ENCODE measurements at regions of chr11 and their contacts with region 1.

Region 1: GRCh38 chr11:44727373-44728287 is 868 bp downstream of the TSPAN18 start:
- DNase-seq: peak; percentile 43 to 45
- ATAC-seq: peak; percentile 68 to 84
- H3K4me3 ChIP-seq: peak overlapping the region; percentile 59 to 94 (median 64)
- H3K27ac ChIP-seq: peak overlapping the region; percentile 22 to 65 (median 48)
- H3K4me1 ChIP-seq: peaks cover 0 to 9% of the 10 kb centered on the region in 2 donors
- H3K27me3 ChIP-seq: peaks cover 13 to 17% (median 17%) of the 10 kb centered on the region in 3 donors
- CTCF ChIP-seq: peak; percentile 56 to 96 (median 88)
- POLR2A ChIP-seq: no peak

Region 2: GRCh38 chr11:44556735-44557409 is 170.8 kb before region 1 on chr11:
- in situ Hi-C with region 1: no loop called
- intact Hi-C with region 1: no loop called
- DNase-seq: peak; percentile 34 to 43
- ATAC-seq: peak; percentile 79 to 81
- H3K4me3 ChIP-seq: no peak overlapping the region
- H3K27ac ChIP-seq: no peak overlapping the region
- H3K4me1 ChIP-seq: peaks cover 5 to 6% of the 10 kb centered on the region in 2 donors
- H3K27me3 ChIP-seq: no peaks in the 10 kb centered on the region
- CTCF ChIP-seq: peak; percentile 86 to 92 (median 92)
- POLR2A ChIP-seq: no peak

Region 3: GRCh38 chr11:44621140-44621681 is 106.4 kb before region 1 on chr11:
- in situ Hi-C with region 1: loop called in 1 of 4 experiments (anchors 10 kb)
- intact Hi-C with region 1: loop called (anchors 2 kb)
- DNase-seq: peak in 1 of 2 donors; percentile 49
- ATAC-seq: peak; percentile 41 to 63
- H3K4me3 ChIP-seq: no peak overlapping the region
- H3K27ac ChIP-seq: no peak overlapping the region
- H3K4me1 ChIP-seq: peaks cover 8 to 9% of the 10 kb centered on the region in 2 donors
- H3K27me3 ChIP-seq: no peaks in the 10 kb centered on the region
- CTCF ChIP-seq: peak; percentile 92 to 97 (median 95)
- POLR2A ChIP-seq: no peak

Region 4: DNA sequence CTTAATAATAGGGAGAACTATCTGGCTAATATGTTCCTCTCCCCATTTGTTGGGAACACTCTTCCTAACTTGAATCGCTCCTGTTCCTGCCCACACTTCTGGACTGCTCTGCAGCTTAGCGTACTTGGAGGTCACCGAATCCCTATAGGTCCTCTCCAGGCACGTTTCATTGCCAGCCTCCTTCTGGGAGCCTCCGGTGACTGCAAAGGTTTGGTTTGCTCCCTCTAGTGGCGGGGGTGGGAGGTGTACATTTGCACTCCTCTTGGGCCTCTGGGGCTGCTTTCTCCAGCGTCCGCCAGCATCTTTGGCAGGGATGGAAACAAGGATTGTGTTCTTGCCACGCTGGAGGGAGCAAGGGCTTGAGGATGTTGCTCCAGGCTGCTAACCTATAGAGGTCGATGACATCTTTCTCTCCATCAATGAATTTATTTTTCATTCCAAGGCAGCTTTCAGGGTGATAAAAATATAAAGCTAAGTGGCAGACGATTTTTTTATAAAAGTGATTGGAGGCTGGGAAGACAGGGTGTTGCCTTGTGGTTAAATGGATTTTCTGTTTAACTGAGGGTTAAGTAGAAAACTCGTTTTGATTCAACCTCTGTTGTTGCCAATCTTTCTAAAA is 47.8 kb after region 1 on chr11:
- in situ Hi-C with region 1: no loop called
- intact Hi-C with region 1: loop called (anchors 2 kb)
- DNase-seq: peak in 1 of 2 donors; percentile 33
- ATAC-seq: peak; percentile 68 to 69
- H3K4me3 ChIP-seq: no peak overlapping the region
- H3K27ac ChIP-seq: no peak overlapping the region
- H3K4me1 ChIP-seq: peaks cover 0 to 16% of the 10 kb centered on the region in 2 donors
- H3K27me3 ChIP-seq: no peaks in the 10 kb centered on the region
- CTCF ChIP-seq: peak; percentile 38 to 75 (median 63)
- POLR2A ChIP-seq: no peak

Region 5: GRCh38 chr11:44785856-44786606 is 58.4 kb after region 1 on chr11:
- in situ Hi-C with region 1: no loop called
- intact Hi-C with region 1: no loop called
- DNase-seq: no peak
- ATAC-seq: no peak
- H3K4me3 ChIP-seq: no peak overlapping the region
- H3K27ac ChIP-seq: no peak overlapping the region
- H3K4me1 ChIP-seq: peaks cover 0 to 6% of the 10 kb centered on the region in 2 donors
- H3K27me3 ChIP-seq: no peaks in the 10 kb centered on the region
- CTCF ChIP-seq: no peak
- POLR2A ChIP-seq: no peak

Region 6: GRCh38 chr11:44893846-44894617 is 166.4 kb after region 1 on chr11:
- in situ Hi-C with region 1: loop called in 1 of 4 experiments (anchors 10 kb)
- intact Hi-C with region 1: loop called (anchors 5 kb)
- DNase-seq: no peak
- ATAC-seq: peak; percentile 51 to 59
- H3K4me3 ChIP-seq: no peak overlapping the region
- H3K27ac ChIP-seq: peak overlapping the region in 1 of 4 donors; percentile 40
- H3K4me1 ChIP-seq: peaks cover 0 to 12% of the 10 kb centered on the region in 2 donors
- H3K27me3 ChIP-seq: no peaks in the 10 kb centered on the region
- CTCF ChIP-seq: peak; percentile 34 to 81 (median 74)
- POLR2A ChIP-seq: no peak

Region 7: DNA sequence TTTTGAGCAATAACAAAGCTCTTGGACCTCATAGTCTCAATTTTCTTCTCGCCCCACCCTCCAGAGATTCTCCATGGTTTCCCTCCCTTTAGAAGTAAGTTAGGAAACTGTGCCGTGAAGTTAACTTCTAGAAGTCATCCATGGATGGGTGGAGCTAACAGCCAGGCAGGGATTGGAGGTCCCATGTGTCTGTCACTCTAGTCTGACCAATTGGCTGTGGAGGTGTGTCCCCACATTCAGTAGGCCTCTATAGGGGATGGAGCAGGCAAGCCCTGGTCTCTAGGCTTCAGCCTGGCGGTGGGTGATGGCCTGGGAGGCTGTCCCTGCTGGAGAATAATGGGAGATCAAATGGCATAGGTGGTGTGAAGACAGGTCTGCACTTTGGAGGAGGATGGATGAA is 172.3 kb after region 1 on chr11:
- in situ Hi-C with region 1: loop called in 3 of 4 experiments (anchors 5 to 10 kb)
- intact Hi-C with region 1: no loop called
- DNase-seq: no peak
- ATAC-seq: no peak
- H3K4me3 ChIP-seq: no peak overlapping the region
- H3K27ac ChIP-seq: no peak overlapping the region
- H3K4me1 ChIP-seq: no peaks in the 10 kb centered on the region
- H3K27me3 ChIP-seq: no peaks in the 10 kb centered on the region
- CTCF ChIP-seq: no peak
- POLR2A ChIP-seq: no peak

Region 8: DNA sequence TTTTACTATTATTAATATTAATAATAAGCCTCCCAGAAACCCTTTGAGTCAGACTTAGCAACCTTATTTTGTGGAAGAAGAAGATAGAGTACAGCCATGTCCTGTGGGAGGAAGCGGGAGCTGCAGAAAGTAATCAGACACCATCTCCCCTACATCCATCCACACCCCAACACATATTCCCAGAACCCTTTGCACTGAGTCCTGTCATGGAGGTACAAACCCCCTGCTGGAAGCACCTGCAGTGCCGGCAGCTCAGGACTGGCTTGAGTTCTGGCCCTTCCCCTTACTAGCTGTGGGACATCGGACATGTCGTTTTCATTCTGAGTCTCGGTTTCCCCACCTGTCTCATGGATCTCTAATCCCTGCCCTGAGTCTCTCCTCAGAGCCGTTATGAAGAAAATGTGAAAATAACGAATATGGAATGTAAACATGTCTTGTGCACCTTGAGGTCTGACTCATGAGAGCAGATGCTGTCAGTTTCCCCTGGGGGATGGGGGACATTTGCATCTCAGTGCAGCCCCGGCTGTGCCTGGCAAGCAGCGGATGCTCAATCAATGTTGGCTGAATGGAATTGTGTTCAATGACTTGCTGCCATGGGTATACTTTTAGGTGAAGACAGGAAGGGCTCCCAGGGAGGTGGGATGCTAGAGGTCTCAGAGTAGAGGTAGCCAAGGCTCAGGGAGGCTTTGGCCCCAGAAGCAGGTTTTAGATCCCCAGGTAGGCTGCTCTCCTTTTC is 177.7 kb after region 1 on chr11:
- in situ Hi-C with region 1: loop called in 2 of 4 experiments (anchors 5 to 10 kb)
- intact Hi-C with region 1: no loop called
- DNase-seq: no peak
- ATAC-seq: no peak
- H3K4me3 ChIP-seq: no peak overlapping the region
- H3K27ac ChIP-seq: no peak overlapping the region
- H3K4me1 ChIP-seq: no peaks in the 10 kb centered on the region
- H3K27me3 ChIP-seq: no peaks in the 10 kb centered on the region
- CTCF ChIP-seq: no peak
- POLR2A ChIP-seq: no peak

Region 9: GRCh38 chr11:44911029-44911814 is 183.6 kb after region 1 on chr11:
- in situ Hi-C with region 1: loop called in 2 of 4 experiments (anchors 5 to 10 kb)
- intact Hi-C with region 1: loop called (anchors 1 kb)
- DNase-seq: peak; percentile 67 to 75
- ATAC-seq: peak; percentile 86 to 94
- H3K4me3 ChIP-seq: no peak overlapping the region
- H3K27ac ChIP-seq: no peak overlapping the region
- H3K4me1 ChIP-seq: peaks cover 0 to 6% of the 10 kb centered on the region in 2 donors
- H3K27me3 ChIP-seq: no peaks in the 10 kb centered on the region
- CTCF ChIP-seq: peak; percentile 52 to 88 (median 80)
- POLR2A ChIP-seq: no peak

Measured in gastrocnemius medialis (tissue), 4 donors.